ENCODE measurements at regions of chr4 and their contacts with region 1.

Region 1: GRCh38 chr4:156968479-156968984 is 3.1 kb downstream of the PDGFC start:
- DNase-seq: peak; percentile 75 to 77
- ATAC-seq: peak; percentile 77
- H3K4me3 ChIP-seq: peak overlapping the region; percentile 33 to 99
- H3K27ac ChIP-seq: peak overlapping the region in 1 of 2 donors; percentile 76
- H3K4me1 ChIP-seq: peaks cover 4% of the 10 kb centered on the region in 2 donors
- H3K27me3 ChIP-seq: no peaks in the 10 kb centered on the region

Region 2: GRCh38 chr4:156475322-156475721 is 493.2 kb before region 1 on chr4:
- intact Hi-C with region 1: loop called (anchors 2 to 5 kb)
- DNase-seq: no peak
- ATAC-seq: peak; percentile 76
- H3K4me3 ChIP-seq: no peak overlapping the region
- H3K27ac ChIP-seq: no peak overlapping the region
- H3K4me1 ChIP-seq: peaks cover 0 to 8% of the 10 kb centered on the region in 2 donors
- H3K27me3 ChIP-seq: no peaks in the 10 kb centered on the region

Region 3: GRCh38 chr4:156558373-156559025 is 410.0 kb before region 1 on chr4:
- intact Hi-C with region 1: loop called in 1 of 2 experiments (anchors 10 kb)
- DNase-seq: peak; percentile 54 to 75
- ATAC-seq: peak; percentile 57
- H3K4me3 ChIP-seq: no peak overlapping the region
- H3K27ac ChIP-seq: peak overlapping the region in 1 of 2 donors; percentile 56
- H3K4me1 ChIP-seq: no peaks in the 10 kb centered on the region
- H3K27me3 ChIP-seq: no peaks in the 10 kb centered on the region

Region 4: DNA sequence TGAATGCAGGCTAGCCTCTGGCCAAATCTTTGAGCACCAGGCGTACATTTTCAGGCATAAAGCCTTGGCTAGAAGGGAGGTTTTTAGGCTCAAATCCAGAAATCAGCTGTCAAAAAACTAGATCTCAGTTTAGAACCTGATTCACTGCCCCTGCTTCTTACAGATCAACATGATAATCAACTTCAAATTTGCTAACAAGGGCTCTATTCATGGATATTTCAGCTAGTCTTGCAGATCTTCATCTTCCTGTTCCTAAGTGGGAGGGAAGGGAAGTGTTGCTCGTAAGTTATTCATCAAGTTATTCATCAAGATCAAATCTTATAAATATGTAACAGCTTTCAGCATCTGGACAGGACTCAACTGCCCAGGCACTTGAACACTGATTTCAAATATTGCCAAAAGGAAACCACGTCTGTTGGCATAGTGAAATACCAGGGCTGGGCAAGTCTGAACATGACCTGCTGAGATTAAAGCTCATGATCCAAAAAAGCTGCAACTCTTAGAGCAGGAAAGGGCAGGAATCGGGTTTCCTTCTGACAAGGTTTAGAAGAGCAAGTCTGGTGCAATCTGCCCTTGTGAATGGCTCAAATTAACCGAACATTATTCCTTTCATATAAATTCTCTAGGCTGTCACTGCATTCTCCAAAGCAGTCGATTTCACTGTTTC is 197.2 kb before region 1 on chr4:
- intact Hi-C with region 1: loop called (anchors 2 to 5 kb)
- DNase-seq: peak in 1 of 2 donors; percentile 51
- ATAC-seq: peak; percentile 75
- H3K4me3 ChIP-seq: peak overlapping the region; percentile 26 to 76
- H3K27ac ChIP-seq: peak overlapping the region; percentile 59 to 67
- H3K4me1 ChIP-seq: peaks cover 7% of the 10 kb centered on the region in 2 donors
- H3K27me3 ChIP-seq: no peaks in the 10 kb centered on the region

Region 5: GRCh38 chr4:156815717-156816359 is 152.7 kb before region 1 on chr4:
- intact Hi-C with region 1: no loop called
- DNase-seq: no peak
- ATAC-seq: no peak
- H3K4me3 ChIP-seq: no peak overlapping the region
- H3K27ac ChIP-seq: no peak overlapping the region
- H3K4me1 ChIP-seq: peaks cover 0 to under 1% of the 10 kb centered on the region in 2 donors
- H3K27me3 ChIP-seq: no peaks in the 10 kb centered on the region

Region 6: GRCh38 chr4:157045507-157046127 is 77.1 kb after region 1 on chr4:
- intact Hi-C with region 1: loop called (anchors 5 kb)
- DNase-seq: no peak
- ATAC-seq: peak; percentile 82
- H3K4me3 ChIP-seq: no peak overlapping the region
- H3K27ac ChIP-seq: no peak overlapping the region
- H3K4me1 ChIP-seq: no peaks in the 10 kb centered on the region
- H3K27me3 ChIP-seq: no peaks in the 10 kb centered on the region

Measured in aorta (tissue), 5 donors.